ENCODE measurements at regions of chr6 and their contacts with region 1.

Region 1: GRCh38 chr6:150016324-150017185 is 8.8 kb downstream of the RAET1L start:
- DNase-seq: peak; percentile 62
- CTCF ChIP-seq: peak; percentile 55

Region 2: DNA sequence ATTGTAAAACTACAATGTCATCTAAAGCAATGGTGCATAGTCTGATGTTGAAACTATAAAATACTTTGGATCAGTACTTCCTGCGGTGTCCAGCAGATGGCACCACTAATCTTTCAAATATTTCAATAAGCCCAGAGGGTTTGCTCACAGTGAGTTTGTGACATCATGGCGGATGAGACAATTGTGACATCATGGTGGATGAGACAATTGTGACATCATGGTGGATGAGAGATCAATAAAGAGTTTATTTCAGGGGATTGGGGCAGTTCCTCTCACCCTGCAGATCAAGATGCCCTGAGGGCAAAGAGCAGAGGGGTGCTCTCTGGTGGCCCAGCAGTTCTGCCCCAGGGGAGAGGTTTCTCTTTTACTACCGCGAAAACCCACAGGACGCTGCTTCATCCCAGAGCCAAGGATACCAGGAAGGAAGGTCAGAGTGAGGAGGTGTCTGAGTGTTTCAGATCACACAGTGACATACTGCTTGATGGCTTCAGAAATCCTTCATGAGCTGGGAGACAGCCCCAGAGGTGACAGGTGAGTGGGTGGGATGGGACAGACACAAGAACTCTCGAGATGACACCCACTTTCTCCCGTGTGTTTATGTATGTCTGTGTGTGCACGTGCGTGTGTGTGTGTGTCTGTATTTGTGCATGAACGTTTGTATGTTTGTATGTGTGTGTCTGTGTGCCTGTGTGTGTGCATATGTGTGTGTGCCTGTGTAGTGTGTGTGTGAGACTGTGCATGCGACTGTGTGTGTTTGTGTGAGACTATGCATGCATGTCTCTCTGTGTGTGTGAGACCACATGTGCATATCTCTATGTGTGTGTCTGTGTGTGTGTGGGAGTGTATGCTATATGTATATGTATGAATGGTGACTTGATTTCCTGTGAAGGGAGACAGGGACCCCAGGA is 82.1 kb before region 1 on chr6:
- CTCF ChIA-PET with region 1: interaction called, 22 read pairs
- POLR2A ChIA-PET with region 1: no interaction called
- DNase-seq: peak; percentile 45
- CTCF ChIP-seq: peak; percentile 66

Region 3: GRCh38 chr6:150037526-150038201 is 21.1 kb after region 1 on chr6:
- CTCF ChIA-PET with region 1: no interaction called
- POLR2A ChIA-PET with region 1: no interaction called
- DNase-seq: no peak
- CTCF ChIP-seq: no peak

Region 4: GRCh38 chr6:150079604-150080003 is 63.0 kb after region 1 on chr6:
- CTCF ChIA-PET with region 1: no interaction called
- POLR2A ChIA-PET with region 1: no interaction called
- DNase-seq: no peak
- CTCF ChIP-seq: no peak

Region 5: GRCh38 chr6:150134280-150134936 is 117.9 kb after region 1 on chr6:
- CTCF ChIA-PET with region 1: no interaction called
- POLR2A ChIA-PET with region 1: no interaction called
- DNase-seq: no peak
- CTCF ChIP-seq: no peak